ENCODE measurements at regions of chr2 and their contacts with region 1.

Region 1: DNA sequence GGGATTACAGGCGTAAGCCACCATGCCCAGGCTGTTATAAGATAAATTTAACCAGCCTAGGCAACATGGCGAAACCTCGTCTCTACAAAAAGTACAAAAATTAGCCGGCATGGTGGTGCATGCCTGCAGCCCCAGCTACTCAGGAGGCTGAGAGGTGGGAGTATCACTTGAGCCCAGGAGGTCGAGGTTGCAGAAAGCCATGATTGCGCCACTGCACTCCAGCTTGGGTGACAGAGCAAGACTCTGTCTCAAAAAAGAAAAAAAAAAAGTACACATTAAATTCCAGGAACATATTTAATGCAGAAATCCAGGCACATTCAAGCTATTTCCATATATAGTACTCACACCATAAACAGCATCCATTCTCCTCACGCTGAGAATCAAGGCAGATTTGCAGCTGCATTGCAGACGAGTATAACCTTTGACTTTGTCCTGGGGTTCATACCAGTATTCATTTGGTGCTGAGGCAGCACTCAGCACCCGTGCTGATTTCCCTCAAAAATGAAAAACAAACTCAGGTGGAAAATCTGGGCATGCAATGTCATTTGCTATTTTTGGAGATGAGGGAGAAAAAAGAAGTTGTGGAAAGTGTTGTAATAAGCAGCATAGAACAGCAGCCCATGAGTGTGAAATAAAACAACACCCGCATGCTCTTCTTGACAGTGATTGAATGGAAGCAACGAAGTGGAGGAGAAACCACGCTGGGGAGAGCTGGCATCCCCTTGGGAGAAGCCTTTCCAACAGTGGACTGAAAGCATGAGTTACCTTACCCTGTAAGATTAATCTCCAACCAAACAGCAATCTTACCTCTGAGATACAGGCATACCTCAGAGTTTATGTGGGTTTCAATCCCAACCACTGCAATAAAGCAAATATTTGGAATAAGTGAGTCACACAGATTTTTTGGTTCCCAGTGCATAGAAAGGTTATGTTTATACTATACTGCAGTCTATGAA is 46.8 kb upstream of the ANXA4 start:
- DNase-seq: peak; percentile 80
- H3K4me3 ChIP-seq: no peak overlapping the region
- H3K27ac ChIP-seq: no peak overlapping the region
- H3K4me1 ChIP-seq: peaks cover 9% of the 10 kb centered on the region
- H3K27me3 ChIP-seq: no peaks in the 10 kb centered on the region
- CTCF ChIP-seq: no peak

Region 2: GRCh38 chr2:69616756-69617155 is 78.4 kb before region 1 on chr2:
- CTCF ChIA-PET with region 1: no interaction called
- dilution Hi-C with region 1: loop called (anchors 5 kb)
- in situ Hi-C with region 1: no loop called
- intact Hi-C with region 1: no loop called
- DNase-seq: peak; percentile 58
- H3K4me3 ChIP-seq: no peak overlapping the region
- H3K27ac ChIP-seq: no peak overlapping the region
- H3K4me1 ChIP-seq: peaks cover 26% of the 10 kb centered on the region
- H3K27me3 ChIP-seq: no peaks in the 10 kb centered on the region
- CTCF ChIP-seq: no peak

Region 3: GRCh38 chr2:69683101-69683971 is 11.8 kb before region 1 on chr2:
- CTCF ChIA-PET with region 1: no interaction called
- dilution Hi-C with region 1: no loop called
- in situ Hi-C with region 1: no loop called
- intact Hi-C with region 1: loop called (anchors 1 kb)
- DNase-seq: peak; percentile 52
- H3K4me3 ChIP-seq: no peak overlapping the region
- H3K27ac ChIP-seq: peak overlapping the region; percentile 52
- H3K4me1 ChIP-seq: peaks cover 32% of the 10 kb centered on the region
- H3K27me3 ChIP-seq: no peaks in the 10 kb centered on the region
- CTCF ChIP-seq: no peak